Left lung (tissue), 14 donors: ENCODE measurements at regions of chr2 and their contacts with region 1.

Region 1: GRCh38 chr2:177332041-177332991 is 60.3 kb upstream of the AGPS start:
- DNase-seq: peak in 3 of 4 donors; percentile 43 to 87 (median 80)
- ATAC-seq: peak; percentile 94
- H3K4me3 ChIP-seq: no peak overlapping the region
- H3K27ac ChIP-seq: no peak overlapping the region
- H3K4me1 ChIP-seq: peaks cover 4 to 5% of the 10 kb centered on the region in 2 donors
- H3K27me3 ChIP-seq: no peaks in the 10 kb centered on the region
- CTCF ChIP-seq: peak; percentile 40 to 48

Region 2: GRCh38 chr2:177422271-177422670 is 90.0 kb after region 1 on chr2:
- intact Hi-C with region 1: loop called in 1 of 2 experiments (anchors 5 kb)
- DNase-seq: no peak
- ATAC-seq: no peak
- H3K4me3 ChIP-seq: no peak overlapping the region
- H3K27ac ChIP-seq: no peak overlapping the region
- H3K4me1 ChIP-seq: peaks cover 0 to 11% of the 10 kb centered on the region in 2 donors
- H3K27me3 ChIP-seq: no peaks in the 10 kb centered on the region
- CTCF ChIP-seq: no peak

Region 3: DNA sequence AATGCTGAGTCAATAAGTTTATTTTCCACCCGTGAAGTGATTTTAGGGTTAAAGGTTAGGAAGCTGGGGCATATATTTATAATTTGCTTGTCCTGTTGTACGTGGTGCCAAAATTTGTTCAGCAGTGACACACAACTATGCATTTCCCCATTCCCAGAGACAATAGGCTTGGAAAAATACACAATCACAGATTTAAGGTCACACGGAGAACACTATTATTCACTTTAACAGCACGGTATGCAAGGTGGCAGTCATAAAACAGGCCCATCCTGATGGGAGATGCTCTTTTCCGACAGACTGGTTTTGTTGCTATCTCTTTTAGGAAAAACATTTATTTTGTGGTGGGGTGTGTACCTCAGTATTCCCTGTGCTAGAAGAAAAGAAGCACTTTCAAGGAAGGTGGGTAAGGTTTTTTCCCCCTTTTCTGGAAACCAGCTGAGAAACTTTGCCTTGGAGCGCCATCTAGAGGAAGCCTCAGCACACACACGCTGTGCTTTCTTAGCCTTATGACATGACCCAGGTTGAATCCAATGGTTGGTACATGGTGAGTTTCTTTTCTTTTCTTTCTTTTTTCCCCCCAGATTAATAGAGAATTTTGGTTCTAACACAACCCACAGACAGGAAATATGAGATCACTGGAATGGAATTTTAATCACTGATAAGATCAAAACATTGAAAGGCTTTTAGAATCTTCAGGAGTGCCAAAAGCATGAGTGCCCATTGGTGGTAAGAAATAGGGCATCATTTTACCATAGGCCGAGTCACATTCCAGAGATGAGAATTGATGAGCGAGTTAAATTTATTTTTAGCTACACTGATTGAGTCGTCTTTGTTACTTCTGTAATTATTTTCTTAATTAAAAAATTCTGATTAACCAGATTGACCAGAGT is 392.3 kb after region 1 on chr2:
- intact Hi-C with region 1: loop called in 1 of 2 experiments (anchors 10 kb)
- DNase-seq: peak in 2 of 4 donors; percentile 56 to 65
- ATAC-seq: peak; percentile 88
- H3K4me3 ChIP-seq: no peak overlapping the region
- H3K27ac ChIP-seq: no peak overlapping the region
- H3K4me1 ChIP-seq: no peaks in the 10 kb centered on the region
- H3K27me3 ChIP-seq: no peaks in the 10 kb centered on the region
- CTCF ChIP-seq: peak; percentile 78 to 82

Region 4: DNA sequence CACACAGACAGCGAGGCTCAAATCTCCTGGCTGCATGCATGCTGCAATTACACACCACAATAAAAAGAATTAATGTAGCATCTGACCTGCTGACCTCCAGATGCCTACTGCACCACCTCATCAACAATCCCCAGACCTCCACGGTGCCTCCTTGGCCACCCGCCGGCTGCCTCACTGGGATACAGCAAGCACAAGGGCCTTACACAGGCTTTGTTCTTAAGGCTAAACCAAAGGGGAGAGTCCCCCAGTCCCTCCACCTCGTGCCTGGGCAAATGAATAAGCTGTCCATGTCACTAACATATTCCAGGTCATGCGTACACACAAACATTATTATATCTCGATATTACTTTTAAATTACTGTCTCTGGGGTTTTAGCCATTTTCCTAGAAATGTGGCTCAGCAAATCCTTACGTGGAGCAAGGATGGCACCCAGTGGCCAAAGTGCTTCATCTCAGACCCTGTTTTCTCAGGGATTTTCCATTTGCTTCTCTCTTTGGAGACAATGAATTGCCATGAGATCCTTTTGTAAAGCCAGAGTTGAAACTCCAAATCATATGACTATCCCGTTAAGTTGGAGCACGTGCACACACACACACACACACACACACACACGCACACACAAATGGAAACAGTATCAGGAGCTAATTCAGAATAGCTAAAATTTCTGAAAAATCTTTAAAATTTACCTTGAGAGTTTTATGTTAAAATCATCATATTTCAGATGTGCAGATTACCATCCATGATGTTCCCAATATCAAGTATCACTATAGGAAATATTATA is 426.5 kb after region 1 on chr2:
- intact Hi-C with region 1: loop called in 1 of 2 experiments (anchors 10 kb)
- DNase-seq: peak in 2 of 4 donors; percentile 68 to 78
- ATAC-seq: peak; percentile 15
- H3K4me3 ChIP-seq: no peak overlapping the region
- H3K27ac ChIP-seq: no peak overlapping the region
- H3K4me1 ChIP-seq: no peaks in the 10 kb centered on the region
- H3K27me3 ChIP-seq: no peaks in the 10 kb centered on the region
- CTCF ChIP-seq: peak in 1 of 2 donors; percentile 19